Posterior vena cava (tissue), 2 donors: ENCODE measurements at regions of chr2 and their contacts with region 1.

Region 1: DNA sequence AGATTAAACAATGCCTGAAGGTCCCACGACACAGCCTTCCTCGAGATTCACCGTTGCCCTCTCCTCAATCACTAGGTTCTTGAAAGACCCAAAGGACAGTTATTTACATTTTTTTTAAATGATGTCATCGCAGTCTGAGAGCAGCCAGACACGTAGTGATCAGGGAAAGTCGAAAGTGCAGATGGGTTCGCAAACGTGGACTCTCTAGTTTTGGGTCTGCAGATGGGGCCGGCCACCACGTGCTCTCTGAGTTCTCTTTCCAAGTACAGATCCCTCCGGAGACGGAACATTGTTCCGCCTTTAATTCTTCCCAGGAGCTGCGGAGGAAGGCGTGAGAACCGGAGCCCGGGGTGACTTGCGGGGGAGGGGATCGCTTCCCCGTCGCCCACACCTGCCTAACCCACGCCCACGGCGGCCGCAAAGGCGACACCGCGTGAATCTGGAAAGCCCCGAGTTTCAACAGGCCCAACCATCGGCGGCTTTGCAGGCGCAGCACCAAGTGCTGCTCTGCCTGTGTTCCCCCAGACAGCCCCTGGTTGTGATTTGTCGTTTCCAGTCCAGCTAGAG is 54.3 kb downstream of the PKDCC start:
- DNase-seq: peak; percentile 86

Region 2: DNA sequence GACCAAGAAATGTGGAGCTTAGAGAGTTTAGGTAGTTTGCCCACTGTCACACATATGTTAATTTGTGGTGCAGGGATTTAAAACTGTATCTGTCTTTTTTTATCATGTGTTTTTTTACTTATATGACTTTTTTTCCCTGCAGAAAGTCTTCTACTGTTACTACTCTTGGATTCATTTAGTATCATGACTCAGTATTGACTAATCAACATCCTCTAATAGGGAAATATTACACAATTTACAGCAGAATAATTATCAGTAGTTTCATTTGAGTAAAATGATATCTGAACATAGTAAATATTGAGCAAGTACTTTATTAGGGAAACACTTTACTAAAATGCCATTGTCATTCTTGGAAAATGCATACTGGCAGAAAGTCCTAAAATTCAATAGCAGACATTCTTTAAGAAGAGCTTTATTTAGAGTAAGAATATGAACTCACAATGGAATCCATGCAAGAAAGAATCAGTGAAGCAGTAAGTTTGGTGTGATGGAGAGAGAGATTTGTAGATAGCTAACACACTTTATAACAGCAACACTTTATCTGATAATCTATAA is 1224.3 kb before region 1 on chr2:
- intact Hi-C with region 1: no loop called
- DNase-seq: no peak

Region 3: GRCh38 chr2:42238644-42239288 is 136.7 kb after region 1 on chr2:
- intact Hi-C with region 1: loop called (anchors 10 kb)
- DNase-seq: no peak